IMR-90 (cell line): ENCODE measurements at regions of chr7 and their contacts with region 1.

Region 1: DNA sequence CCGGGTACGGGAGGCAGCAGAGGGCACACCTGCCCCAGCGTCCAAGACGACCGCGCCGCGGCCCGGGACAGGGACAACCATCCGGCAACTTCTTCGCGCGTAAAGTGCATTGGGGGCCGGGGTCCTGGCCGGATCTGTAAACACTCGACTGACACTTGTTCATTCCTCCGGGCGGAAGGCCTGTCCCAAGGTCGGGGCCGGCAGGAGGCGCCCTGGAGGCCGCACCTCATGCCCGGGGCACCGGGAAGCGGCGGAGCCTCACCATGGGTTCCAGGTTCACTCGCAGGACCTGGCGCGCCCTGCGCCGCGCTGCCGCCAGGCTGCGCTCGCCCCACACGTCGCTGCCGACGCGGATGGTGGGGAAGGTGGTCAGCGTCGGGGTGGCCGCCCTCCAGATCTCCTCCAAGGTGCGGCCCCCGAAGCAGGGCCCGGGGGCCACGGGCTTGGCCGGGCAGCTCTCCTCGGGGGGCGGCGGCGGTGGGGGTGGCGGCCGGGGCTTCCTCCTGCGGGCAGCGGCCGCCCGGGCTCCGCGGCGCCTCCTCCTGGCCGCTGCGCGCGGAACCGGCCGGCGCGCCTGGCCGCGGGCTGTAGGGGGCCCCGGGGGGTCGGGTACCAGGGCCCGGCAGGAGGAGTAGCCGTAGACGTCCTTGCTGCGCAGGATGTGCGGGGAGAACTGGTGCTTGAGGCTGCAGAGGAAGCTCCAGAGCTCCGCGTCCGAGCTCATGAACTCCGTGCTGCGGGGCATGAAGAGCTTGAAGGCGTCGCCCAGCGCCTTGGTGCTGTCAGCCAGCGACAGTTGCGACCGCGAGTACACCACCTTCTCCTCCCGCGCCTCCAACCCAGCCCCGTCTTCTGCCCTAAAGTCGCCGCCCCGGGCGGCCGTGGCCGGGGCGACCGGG is 746 bp downstream of the CCDC71L start:
- DNase-seq: peak; percentile 74
- ATAC-seq: peak; percentile 60
- H3K4me3 ChIP-seq: peak overlapping the region; percentile 84
- H3K27ac ChIP-seq: peak overlapping the region; percentile 97
- H3K4me1 ChIP-seq: 0 out of 2 replicates have a peak, but pooled peaks cover 2% of the 10 kb centered on the region
- H3K27me3 ChIP-seq: no peaks in the 10 kb centered on the region
- CTCF ChIP-seq: peak; percentile 73
- POLR2A ChIP-seq: no peak
- RAD21 ChIP-seq: peak; percentile 78

Region 2: GRCh38 chr7:106367018-106367420 is 293.2 kb before region 1 on chr7:
- CTCF ChIA-PET with region 1: no interaction called
- POLR2A ChIA-PET with region 1: no interaction called
- dilution Hi-C with region 1: no loop called
- in situ Hi-C with region 1: no loop called
- intact Hi-C with region 1: loop called (anchors 5 kb)
- DNase-seq: peak; percentile 22
- ATAC-seq: peak; percentile 73
- H3K4me3 ChIP-seq: no peak overlapping the region
- H3K27ac ChIP-seq: no peak overlapping the region
- H3K4me1 ChIP-seq: no peaks in the 10 kb centered on the region
- H3K27me3 ChIP-seq: no peaks in the 10 kb centered on the region; the same call in 1 of the 2 replicates
- CTCF ChIP-seq: peak; percentile 58
- POLR2A ChIP-seq: no peak
- RAD21 ChIP-seq: peak; percentile 56

Region 3: GRCh38 chr7:106448992-106449859 is 211.0 kb before region 1 on chr7:
- CTCF ChIA-PET with region 1: no interaction called
- POLR2A ChIA-PET with region 1: no interaction called
- dilution Hi-C with region 1: no loop called
- in situ Hi-C with region 1: no loop called
- intact Hi-C with region 1: no loop called
- DNase-seq: no peak
- ATAC-seq: no peak
- H3K4me3 ChIP-seq: no peak overlapping the region
- H3K27ac ChIP-seq: no peak overlapping the region
- H3K4me1 ChIP-seq: no peaks in the 10 kb centered on the region; the same call in 1 of the 2 replicates
- H3K27me3 ChIP-seq: no peaks in the 10 kb centered on the region
- CTCF ChIP-seq: no peak
- POLR2A ChIP-seq: no peak
- RAD21 ChIP-seq: no peak

Region 4: DNA sequence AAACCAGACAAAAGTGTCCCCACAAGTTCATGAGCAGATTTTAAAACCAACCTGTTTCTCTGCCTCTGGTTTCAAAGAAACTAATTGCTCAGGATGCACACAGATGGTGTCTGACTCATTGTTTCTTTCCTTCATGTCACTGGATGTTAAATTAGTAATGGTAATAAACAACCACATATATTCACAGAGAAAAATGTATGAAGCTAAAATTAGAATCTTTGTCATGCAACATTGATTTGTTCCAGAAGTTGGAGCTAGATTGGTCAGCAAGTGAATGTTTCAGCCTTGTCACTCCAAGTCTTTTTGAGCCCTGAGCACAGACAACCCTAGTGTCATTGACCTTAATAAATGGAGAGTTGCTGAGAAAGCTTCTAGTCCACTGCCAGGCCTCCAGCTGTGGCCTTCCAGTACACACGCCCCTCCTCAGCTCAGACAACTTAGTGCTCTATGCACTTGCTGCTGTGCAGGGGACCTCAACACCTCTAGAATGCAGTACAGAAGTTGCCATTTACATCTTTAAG is 175.1 kb before region 1 on chr7:
- CTCF ChIA-PET with region 1: no interaction called
- POLR2A ChIA-PET with region 1: no interaction called
- dilution Hi-C with region 1: no loop called
- in situ Hi-C with region 1: no loop called
- intact Hi-C with region 1: loop called (anchors 5 kb)
- DNase-seq: peak; percentile 91
- ATAC-seq: peak; percentile 70
- H3K4me3 ChIP-seq: no peak overlapping the region
- H3K27ac ChIP-seq: no peak overlapping the region
- H3K4me1 ChIP-seq: peaks cover 21% of the 10 kb centered on the region
- H3K27me3 ChIP-seq: no peaks in the 10 kb centered on the region
- CTCF ChIP-seq: no peak
- POLR2A ChIP-seq: no peak
- RAD21 ChIP-seq: no peak

Region 5: GRCh38 chr7:106736508-106737201 is 76.4 kb after region 1 on chr7:
- CTCF ChIA-PET with region 1: interaction called, 7 read pairs
- POLR2A ChIA-PET with region 1: no interaction called
- dilution Hi-C with region 1: no loop called
- in situ Hi-C with region 1: no loop called
- intact Hi-C with region 1: loop called (anchors 1 kb)
- DNase-seq: peak; percentile 83
- ATAC-seq: peak; percentile 95
- H3K4me3 ChIP-seq: no peak overlapping the region; the same call in 1 of the 2 replicates
- H3K27ac ChIP-seq: peak overlapping the region; percentile 77
- H3K4me1 ChIP-seq: peaks cover 5% of the 10 kb centered on the region
- H3K27me3 ChIP-seq: no peaks in the 10 kb centered on the region
- CTCF ChIP-seq: peak; percentile 82
- POLR2A ChIP-seq: no peak
- RAD21 ChIP-seq: peak; percentile 89

Region 6: GRCh38 chr7:107044347-107045194 is 384.4 kb after region 1 on chr7 and contains the start of gene PRKAR2B:
- CTCF ChIA-PET with region 1: no interaction called
- POLR2A ChIA-PET with region 1: no interaction called
- dilution Hi-C with region 1: no loop called
- in situ Hi-C with region 1: no loop called
- intact Hi-C with region 1: loop called (anchors 2 kb)
- DNase-seq: peak; percentile 64
- ATAC-seq: peak; percentile 97
- H3K4me3 ChIP-seq: peak within 1 kb of the TSS; percentile 93
- H3K27ac ChIP-seq: peak within 1 kb of the TSS; percentile 51
- H3K4me1 ChIP-seq: peaks cover 4% of the 10 kb centered on the region; the same call in 1 of the 2 replicates
- H3K27me3 ChIP-seq: no peaks in the 10 kb centered on the region
- CTCF ChIP-seq: 0 out of 2 replicates have a peak, but pooled peaks have one; percentile 14
- POLR2A ChIP-seq: no peak
- RAD21 ChIP-seq: no peak
- total RNA-seq, gene PRKAR2B: 3.0 and 8.1 TPM in 2 replicates